A549 (cell line): ENCODE measurements at regions of chr9 and their contacts with region 1.

Region 1: GRCh38 chr9:98791147-98792095 is 4.9 kb downstream of the ANKS6 start:
- DNase-seq: peak; percentile 77 to 81
- ATAC-seq: peak; percentile 66 to 95
- H3K4me3 ChIP-seq: no peak overlapping the region
- H3K27ac ChIP-seq: peak overlapping the region in 1 of 2 experiments; percentile 53; a peak in 2 of 6 replicates
- H3K4me1 ChIP-seq: peaks cover 24% of the 10 kb centered on the region
- CTCF ChIP-seq: peak; percentile 95
- EP300 ChIP-seq: no peak
- POLR2A ChIP-seq: no peak
- RAD21 ChIP-seq: peak; percentile 65 to 70

Region 2: DNA sequence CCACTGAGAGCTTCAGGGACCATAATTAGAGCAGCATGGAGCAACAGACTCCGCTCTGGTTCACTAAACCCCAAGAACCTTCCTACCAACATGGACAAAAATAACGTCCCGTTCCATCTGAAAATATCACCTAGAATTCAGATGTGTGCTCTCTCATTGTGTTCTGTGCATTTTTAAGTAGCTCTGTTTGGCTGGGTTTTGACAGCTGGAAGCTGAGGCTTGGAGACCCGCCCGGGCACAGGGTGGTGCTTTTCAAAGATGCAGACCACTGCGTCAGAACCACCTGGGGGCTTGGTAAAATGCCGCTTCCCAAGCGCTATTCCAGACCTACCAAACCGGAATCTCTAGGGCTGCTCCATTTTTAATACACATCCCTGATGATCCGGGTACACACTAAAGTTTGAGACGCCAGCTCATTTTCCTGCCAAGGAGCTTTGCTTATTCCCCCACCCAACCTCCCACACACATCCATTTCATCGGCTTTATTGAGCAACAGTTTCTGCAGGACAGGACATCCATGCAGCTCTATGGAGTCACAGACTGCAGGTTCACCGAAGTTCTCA is 187.5 kb before region 1 on chr9:
- CTCF ChIA-PET with region 1: no interaction called
- POLR2A ChIA-PET with region 1: no interaction called
- DNase-seq: no peak
- ATAC-seq: no peak
- H3K4me3 ChIP-seq: no peak overlapping the region
- H3K27ac ChIP-seq: no peak overlapping the region
- H3K4me1 ChIP-seq: no peaks in the 10 kb centered on the region
- CTCF ChIP-seq: no peak
- EP300 ChIP-seq: no peak
- POLR2A ChIP-seq: no peak
- RAD21 ChIP-seq: no peak

Region 3: GRCh38 chr9:98801969-98802371 is 10.5 kb after region 1 on chr9:
- CTCF ChIA-PET with region 1: interaction called, 41 read pairs
- POLR2A ChIA-PET with region 1: no interaction called
- DNase-seq: no peak
- ATAC-seq: peak in 1 of 2 experiments; percentile 6; a peak in 1 of 6 replicates
- H3K4me3 ChIP-seq: no peak overlapping the region
- H3K27ac ChIP-seq: no peak overlapping the region
- H3K4me1 ChIP-seq: peaks cover 5% of the 10 kb centered on the region; the same call in 2 of the 3 replicates
- CTCF ChIP-seq: no peak
- EP300 ChIP-seq: no peak
- POLR2A ChIP-seq: no peak
- RAD21 ChIP-seq: no peak

Region 4: GRCh38 chr9:98807070-98807810 is 15.8 kb after region 1 on chr9 and contains the start of gene GALNT12:
- CTCF ChIA-PET with region 1: interaction called, 41 read pairs
- POLR2A ChIA-PET with region 1: no interaction called
- DNase-seq: peak; percentile 36 to 52
- ATAC-seq: peak; percentile 80 to 83
- H3K4me3 ChIP-seq: peak within 1 kb of the TSS; percentile 75
- H3K27ac ChIP-seq: peak within 1 kb of the TSS; percentile 78 to 93
- H3K4me1 ChIP-seq: peaks cover 24% of the 10 kb centered on the region
- CTCF ChIP-seq: no peak; the same call in 1 of the 3 replicates
- EP300 ChIP-seq: no peak
- POLR2A ChIP-seq: peak; percentile 94
- RAD21 ChIP-seq: no peak
- polyA plus RNA-seq, gene GALNT12: 7.3 and 7.7 TPM in 2 replicates